ENCODE measurements at regions of chr7 and their contacts with region 1.

Region 1: GRCh38 chr7:48154792-48155413 is 16.4 kb upstream of the ABCA13 start:
- DNase-seq: peak; percentile 63 to 66
- H3K4me3 ChIP-seq: no peak overlapping the region
- H3K27ac ChIP-seq: no peak overlapping the region
- H3K4me1 ChIP-seq: peaks cover 7% of the 10 kb centered on the region; the same call in 1 of the 2 replicates
- H3K27me3 ChIP-seq: peaks cover 32% of the 10 kb centered on the region
- CTCF ChIP-seq: peak; percentile 93

Region 2: DNA sequence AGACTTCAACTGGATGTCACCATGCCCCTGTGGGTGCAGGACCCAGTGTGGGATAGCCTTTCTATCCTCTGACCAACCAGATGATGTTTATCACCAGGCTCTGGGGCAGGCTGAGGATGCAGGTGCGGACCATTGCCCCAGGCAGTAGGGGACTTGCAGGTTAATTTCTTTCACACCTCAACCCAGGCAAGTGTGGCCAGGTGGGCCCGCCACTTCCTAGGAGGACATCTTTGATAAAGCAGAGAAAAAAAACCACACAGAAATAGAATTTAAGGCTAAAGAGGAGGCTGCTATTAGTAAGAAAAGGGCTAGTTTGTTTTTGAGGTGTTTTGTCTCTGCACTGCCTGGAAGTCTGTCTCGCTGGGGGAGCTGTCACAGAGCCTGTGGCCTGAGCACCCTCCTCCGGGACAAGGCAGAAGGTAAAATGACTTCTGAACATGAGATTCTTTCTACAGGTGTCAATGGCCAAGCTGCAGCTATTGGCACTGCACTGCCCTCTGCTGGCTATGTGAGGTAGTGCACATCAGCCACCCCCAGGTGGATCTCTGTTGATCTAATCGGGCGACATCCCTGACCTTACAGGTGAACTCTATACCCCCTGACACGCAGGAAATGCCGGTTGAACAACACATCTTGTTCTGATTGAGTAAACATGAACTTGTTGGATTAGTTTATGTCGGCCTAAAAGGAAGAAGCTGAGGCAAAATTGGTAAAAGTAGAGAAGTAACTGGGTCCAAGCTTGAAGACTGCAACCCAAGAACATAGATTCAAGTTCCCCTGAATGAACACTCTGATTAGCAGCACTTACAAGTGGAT is 44.8 kb before region 1 on chr7:
- CTCF ChIA-PET with region 1: interaction called, 11 read pairs
- POLR2A ChIA-PET with region 1: no interaction called
- intact Hi-C with region 1: loop called (anchors 1 kb)
- DNase-seq: peak; percentile 95 to 96
- H3K4me3 ChIP-seq: peak overlapping the region; percentile 6; the same call in 1 of the 2 replicates
- H3K27ac ChIP-seq: peak overlapping the region; percentile 9
- H3K4me1 ChIP-seq: peaks cover 40% of the 10 kb centered on the region
- H3K27me3 ChIP-seq: no peaks in the 10 kb centered on the region
- CTCF ChIP-seq: peak; percentile 100